ENCODE measurements at regions of chr19 and their contacts with region 1.

Region 1: DNA sequence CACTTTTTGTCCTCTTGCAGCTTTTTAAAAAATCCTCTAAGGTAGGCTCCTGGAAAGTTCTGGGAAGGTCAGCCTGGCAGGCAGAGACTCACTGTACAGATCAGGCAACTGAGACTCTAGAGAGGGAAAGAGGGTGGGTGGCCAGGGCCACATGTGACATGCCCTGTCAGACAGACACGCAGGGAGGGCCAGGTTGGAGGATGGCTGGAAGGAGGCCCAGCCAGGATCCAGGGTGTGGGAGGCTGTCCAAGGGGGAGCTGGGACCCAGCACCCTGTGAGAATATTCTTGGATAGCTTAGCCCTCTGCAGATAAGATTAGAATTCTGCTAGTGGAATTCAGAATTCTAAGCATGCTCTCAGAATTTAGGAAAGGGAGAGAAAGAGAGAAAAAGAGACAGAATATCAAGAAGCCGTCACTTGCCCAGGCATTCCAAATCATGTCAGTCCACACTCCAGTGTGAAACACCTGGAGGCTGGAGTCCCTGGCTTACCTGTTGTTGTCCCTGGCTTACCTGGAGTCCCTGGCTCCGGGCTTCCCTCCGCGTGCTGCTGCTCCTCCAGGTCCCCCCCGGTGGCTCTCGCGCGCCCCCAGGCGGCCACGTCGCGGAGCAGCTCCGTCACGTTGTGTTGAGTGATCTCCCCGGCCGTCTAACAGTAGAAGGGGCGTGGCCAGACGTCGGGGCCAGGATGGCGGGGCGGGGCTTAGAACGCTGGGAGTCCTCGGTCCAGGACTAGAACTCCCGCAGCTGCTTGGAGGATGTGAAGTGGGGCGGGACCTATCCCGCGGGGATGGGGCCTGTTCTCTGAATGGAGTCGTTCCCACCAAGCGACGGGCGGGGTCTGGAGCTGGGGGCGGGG is 2.8 kb upstream of the TNNI3 start:
- DNase-seq: peak; percentile 100
- ATAC-seq: peak; percentile 86
- H3K4me3 Mint-ChIP-seq: peak overlapping the region; percentile 64
- H3K27ac Mint-ChIP-seq: no peak overlapping the region
- H3K4me1 Mint-ChIP-seq: peaks cover 21% of the 10 kb centered on the region
- H3K27me3 Mint-ChIP-seq: peaks cover 77% of the 10 kb centered on the region
- CTCF ChIP-seq: peak; percentile 95

Region 2: GRCh38 chr19:55000761-55001160 is 159.6 kb before region 1 on chr19:
- CTCF ChIA-PET with region 1: no interaction called
- POLR2A ChIA-PET with region 1: no interaction called
- DNase-seq: no peak
- ATAC-seq: no peak
- H3K4me3 Mint-ChIP-seq: no peak overlapping the region
- H3K27ac Mint-ChIP-seq: no peak overlapping the region
- H3K4me1 Mint-ChIP-seq: peaks cover 24% of the 10 kb centered on the region
- H3K27me3 Mint-ChIP-seq: peaks cover 21% of the 10 kb centered on the region
- CTCF ChIP-seq: no peak

Region 3: DNA sequence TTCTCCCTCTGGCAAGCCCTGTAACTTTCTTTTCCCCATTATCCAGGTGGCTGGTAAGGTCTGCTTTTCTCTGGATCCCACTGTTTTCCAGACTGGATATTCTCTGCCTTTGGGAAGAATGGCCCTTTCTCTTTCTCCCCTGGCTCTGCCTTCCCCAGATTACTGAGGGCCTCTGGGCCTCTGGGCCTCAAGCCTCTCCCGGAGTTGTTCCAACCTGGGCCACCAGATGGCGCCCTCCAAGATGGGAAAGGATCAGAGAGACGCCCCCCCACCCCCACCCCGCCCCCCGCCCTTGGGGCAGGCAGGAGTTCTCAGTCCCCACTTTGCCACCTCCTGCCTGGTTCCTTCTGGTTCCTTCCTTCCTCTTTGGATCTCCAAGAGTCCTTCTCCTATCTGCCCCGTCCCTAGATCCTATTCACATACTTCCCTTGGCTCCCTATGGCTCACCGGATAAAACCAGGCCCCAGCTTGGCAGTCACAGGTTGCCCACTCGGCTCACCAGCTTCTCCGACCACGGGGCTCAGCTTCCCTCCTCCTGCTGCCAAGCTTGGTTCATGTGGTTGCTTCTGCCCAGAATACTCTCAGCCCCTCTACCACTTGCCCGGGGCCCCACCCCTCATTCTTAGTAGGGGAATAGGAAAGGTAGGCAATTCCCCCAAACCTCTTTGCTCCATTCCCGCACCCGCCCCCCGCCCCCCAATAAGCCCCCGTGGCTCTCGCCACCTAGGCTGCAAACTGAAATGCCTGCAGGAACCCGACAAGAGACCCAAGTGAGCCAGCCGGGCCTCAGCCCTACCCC is 71.6 kb before region 1 on chr19:
- CTCF ChIA-PET with region 1: interaction called, 16 read pairs
- POLR2A ChIA-PET with region 1: interaction called, 4 read pairs
- DNase-seq: peak; percentile 97
- ATAC-seq: no peak
- H3K4me3 Mint-ChIP-seq: peak overlapping the region; percentile 88
- H3K27ac Mint-ChIP-seq: peak overlapping the region; percentile 76
- H3K4me1 Mint-ChIP-seq: peaks cover 43% of the 10 kb centered on the region
- H3K27me3 Mint-ChIP-seq: peaks cover 38% of the 10 kb centered on the region
- CTCF ChIP-seq: peak; percentile 95

Region 4: DNA sequence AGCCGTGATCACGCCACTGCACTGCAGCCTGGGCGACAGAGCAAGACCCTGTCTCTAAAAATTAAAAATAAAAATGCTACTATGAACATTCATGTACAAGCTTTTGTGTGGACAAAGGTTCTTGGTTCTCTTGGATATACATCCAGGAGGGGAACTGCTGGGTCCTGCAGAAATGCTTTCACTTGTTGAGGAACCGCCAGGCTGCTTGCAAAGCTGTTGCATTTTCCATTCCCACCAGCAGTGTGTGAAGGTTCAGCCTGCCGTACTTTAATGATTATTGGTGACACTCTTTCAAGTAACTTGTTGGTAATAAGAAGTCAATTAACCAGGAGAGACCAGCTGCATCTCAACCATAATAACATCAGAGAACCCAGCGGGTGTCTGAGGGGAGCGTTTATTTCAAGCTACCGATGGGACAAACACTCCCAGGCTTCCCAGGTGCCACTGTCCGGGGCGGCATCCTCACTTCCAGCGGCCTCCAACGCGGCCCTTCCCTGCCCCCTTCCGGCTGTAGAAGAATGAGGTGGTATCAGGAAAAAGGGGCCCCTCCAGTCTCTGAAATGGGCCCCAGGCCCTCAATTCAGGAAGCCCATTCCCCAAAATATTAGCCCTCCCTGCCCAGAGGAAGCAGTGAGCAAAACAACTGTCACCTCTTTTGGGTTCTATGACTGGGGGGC is 27.8 kb before region 1 on chr19:
- CTCF ChIA-PET with region 1: interaction called, 12 read pairs
- POLR2A ChIA-PET with region 1: no interaction called
- DNase-seq: no peak
- ATAC-seq: peak; percentile 66
- H3K4me3 Mint-ChIP-seq: no peak overlapping the region
- H3K27ac Mint-ChIP-seq: 0 out of 2 replicates have a peak overlapping the region, but pooled peaks have one; percentile 22
- H3K4me1 Mint-ChIP-seq: peaks cover 23% of the 10 kb centered on the region
- H3K27me3 Mint-ChIP-seq: peaks cover 4% of the 10 kb centered on the region
- CTCF ChIP-seq: no peak

Region 5: GRCh38 chr19:55173714-55174409 is 13.5 kb after region 1 on chr19:
- CTCF ChIA-PET with region 1: interaction called, 23 read pairs
- POLR2A ChIA-PET with region 1: interaction called, 3 read pairs
- DNase-seq: peak; percentile 96
- ATAC-seq: peak; percentile 93
- H3K4me3 Mint-ChIP-seq: peak overlapping the region; percentile 80
- H3K27ac Mint-ChIP-seq: no peak overlapping the region
- H3K4me1 Mint-ChIP-seq: peaks cover 24% of the 10 kb centered on the region
- H3K27me3 Mint-ChIP-seq: peaks cover 96% of the 10 kb centered on the region
- CTCF ChIP-seq: no peak

Region 6: DNA sequence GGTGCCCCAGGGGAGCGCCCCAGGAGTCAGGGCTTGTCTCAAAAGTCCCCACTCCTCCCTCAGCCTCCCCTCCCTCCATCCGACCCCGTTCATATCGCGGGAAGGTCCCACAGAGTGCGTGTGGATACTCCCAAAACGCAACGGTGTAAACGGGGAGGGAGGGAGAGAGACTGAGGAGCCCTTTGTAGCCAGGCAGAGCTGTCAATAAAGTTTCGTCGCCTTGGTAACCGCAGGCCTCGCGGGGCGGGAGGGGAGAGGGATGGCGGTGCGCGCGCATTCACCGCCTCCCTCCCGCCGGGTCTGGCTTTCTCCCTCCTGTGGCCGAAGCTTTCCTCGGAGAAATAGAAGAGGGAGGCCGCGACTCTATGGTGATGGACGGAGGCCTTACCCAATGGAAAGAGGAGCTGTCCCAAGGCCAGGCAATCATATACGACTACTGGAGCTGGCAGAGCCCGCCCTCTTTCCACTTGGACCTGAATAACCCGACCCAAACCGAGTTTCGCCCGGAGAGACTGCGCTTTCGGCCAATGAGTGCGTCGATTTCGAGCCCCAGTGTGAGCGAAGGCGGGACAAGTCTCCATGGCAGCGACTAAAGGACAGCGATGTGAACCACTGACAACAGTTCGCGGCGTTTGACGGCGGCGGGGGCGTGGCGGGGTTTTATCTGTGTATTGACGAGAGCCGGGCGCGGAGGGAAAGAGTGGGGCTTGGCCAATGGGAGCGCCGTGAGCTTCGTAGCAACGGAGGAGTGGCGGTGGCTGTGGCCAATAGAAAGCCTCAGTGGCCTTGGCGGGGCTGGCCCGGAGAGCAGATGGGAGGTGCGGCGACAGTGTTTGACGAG is 178.9 kb after region 1 on chr19 and contains the start of gene KMT5C:
- CTCF ChIA-PET with region 1: interaction called, 12 read pairs
- POLR2A ChIA-PET with region 1: no interaction called
- DNase-seq: peak; percentile 100
- ATAC-seq: peak; percentile 89
- H3K4me3 Mint-ChIP-seq: peak within 1 kb of the TSS; percentile 83
- H3K27ac Mint-ChIP-seq: peak within 1 kb of the TSS; percentile 100
- H3K4me1 Mint-ChIP-seq: peaks cover 13% of the 10 kb centered on the region
- H3K27me3 Mint-ChIP-seq: peaks cover 26% of the 10 kb centered on the region
- CTCF ChIP-seq: no peak
- total RNA-seq, gene KMT5C: 49.1 to 63.1 TPM (median 52.3 TPM) in 3 replicates

Measured in WTC11 (cell line).